ENCODE measurements at regions of chr5 and their contacts with region 1.

Region 1: DNA sequence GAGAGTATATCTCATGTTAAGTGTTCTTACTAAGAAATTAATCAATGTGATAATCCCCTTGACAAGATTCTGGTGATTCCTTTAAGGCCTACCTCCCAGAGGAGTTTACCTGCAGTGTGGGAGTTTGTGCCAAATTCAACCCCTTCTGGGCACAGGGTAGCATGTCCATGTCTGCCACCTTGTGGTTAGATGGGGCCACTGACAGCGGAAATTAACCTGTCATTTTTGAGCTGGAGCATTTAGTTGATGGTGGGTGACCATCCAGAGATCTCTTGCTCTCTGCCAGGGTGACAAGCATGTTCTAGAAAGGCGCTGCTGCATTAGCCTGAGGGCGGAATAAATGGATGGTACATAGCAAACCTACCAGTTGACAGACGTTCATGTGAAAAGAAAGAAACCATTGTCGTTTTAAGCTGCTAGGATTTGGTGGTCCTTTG is 132.2 kb downstream of the FBXO4 start:
- H3K4me3 ChIP-seq: no peak overlapping the region
- H3K27ac ChIP-seq: no peak overlapping the region
- H3K4me1 ChIP-seq: no peaks in the 10 kb centered on the region
- CTCF ChIP-seq: peak; percentile 54; the same call in 1 of the 2 replicates

Region 2: GRCh38 chr5:41856644-41857491 is 200.4 kb before region 1 on chr5:
- CTCF ChIA-PET with region 1: interaction called, 118 read pairs
- POLR2A ChIA-PET with region 1: no interaction called
- H3K4me3 ChIP-seq: no peak overlapping the region
- H3K27ac ChIP-seq: no peak overlapping the region
- H3K4me1 ChIP-seq: no peaks in the 10 kb centered on the region
- CTCF ChIP-seq: peak; percentile 67; the same call in 1 of the 2 replicates

Region 3: GRCh38 chr5:41908374-41909079 is 148.7 kb before region 1 on chr5:
- CTCF ChIA-PET with region 1: no interaction called
- POLR2A ChIA-PET with region 1: no interaction called
- H3K4me3 ChIP-seq: no peak overlapping the region
- H3K27ac ChIP-seq: no peak overlapping the region
- H3K4me1 ChIP-seq: peaks cover under 1% of the 10 kb centered on the region; the same call in 1 of the 2 replicates
- CTCF ChIP-seq: no peak

Region 4: DNA sequence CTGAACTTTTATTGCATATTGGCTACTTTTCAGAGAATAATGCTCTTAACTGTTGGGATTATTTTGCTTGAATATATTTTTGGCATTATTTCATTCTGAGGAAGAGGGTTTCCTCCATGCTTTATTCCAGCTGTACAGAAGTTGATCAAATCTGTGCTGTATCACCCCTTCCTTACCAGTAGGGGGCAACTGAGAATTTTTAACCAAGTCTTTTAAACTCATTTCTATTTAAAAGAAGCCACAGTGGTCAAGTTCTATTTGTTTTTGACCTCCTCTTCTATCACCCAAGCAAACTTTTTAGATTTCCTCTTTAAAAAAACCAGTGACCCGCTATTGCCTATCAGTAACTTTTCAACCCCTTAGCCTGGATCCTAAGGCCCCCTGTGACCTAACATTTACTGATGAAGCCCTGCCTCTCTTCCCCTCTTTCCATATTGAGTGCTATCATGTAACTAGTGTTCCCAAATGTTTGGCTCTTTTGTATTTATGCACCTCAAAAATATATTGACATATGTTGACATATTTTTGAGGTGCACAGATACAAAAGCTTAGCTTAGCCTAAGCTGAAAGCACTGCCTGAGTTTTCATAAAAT is 51.6 kb before region 1 on chr5:
- CTCF ChIA-PET with region 1: interaction called, 17 read pairs
- POLR2A ChIA-PET with region 1: no interaction called
- H3K4me3 ChIP-seq: no peak overlapping the region
- H3K27ac ChIP-seq: no peak overlapping the region
- H3K4me1 ChIP-seq: no peaks in the 10 kb centered on the region
- CTCF ChIP-seq: 0 out of 2 replicates have a peak, but pooled peaks have one; percentile 14

Region 5: DNA sequence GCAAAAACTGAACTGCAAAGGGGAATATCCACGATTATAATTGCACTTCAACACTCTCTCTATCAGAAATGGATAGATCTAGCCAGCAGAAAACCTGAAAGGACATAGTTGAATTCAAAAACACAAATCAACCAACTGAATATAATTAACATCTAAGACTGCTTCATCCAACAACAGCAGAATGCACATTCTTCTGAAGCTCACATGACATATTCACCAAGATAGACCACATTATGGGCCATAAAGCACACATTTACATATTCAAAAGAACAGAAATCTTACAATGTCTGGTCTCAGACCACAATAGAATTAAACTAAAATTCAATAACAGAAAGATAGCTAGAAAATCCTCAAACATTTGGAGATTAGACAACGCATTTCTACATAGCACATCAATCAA is 13.9 kb before region 1 on chr5:
- CTCF ChIA-PET with region 1: interaction called, 10 read pairs
- POLR2A ChIA-PET with region 1: no interaction called
- H3K4me3 ChIP-seq: no peak overlapping the region
- H3K27ac ChIP-seq: no peak overlapping the region
- H3K4me1 ChIP-seq: no peaks in the 10 kb centered on the region
- CTCF ChIP-seq: no peak

Region 6: DNA sequence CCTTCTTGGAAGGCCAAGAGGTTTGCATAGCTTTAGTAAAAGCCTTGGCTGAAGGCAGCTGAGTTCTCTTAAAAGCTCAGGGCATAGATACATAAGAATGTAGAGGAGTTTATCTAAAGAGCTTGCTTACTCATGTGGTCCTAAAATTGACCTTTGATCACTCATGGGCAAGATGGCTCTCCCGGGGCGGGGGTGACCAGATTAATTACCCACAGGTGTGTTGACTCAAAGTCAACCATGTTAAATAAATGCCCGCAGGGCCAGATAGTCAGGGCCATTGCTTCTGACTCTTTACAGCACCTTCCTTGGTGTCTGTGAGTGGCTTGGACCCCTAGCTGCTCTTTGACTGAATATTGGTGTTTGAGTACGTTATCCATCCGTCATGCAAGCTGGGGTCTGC is 332.8 kb after region 1 on chr5:
- CTCF ChIA-PET with region 1: no interaction called
- POLR2A ChIA-PET with region 1: no interaction called
- H3K4me3 ChIP-seq: no peak overlapping the region
- H3K27ac ChIP-seq: no peak overlapping the region
- H3K4me1 ChIP-seq: no peaks in the 10 kb centered on the region
- CTCF ChIP-seq: no peak